Activated CD8-positive, alpha-beta T cell treated with anti-CD3 and anti-CD28 coated beads for 36 hours (primary cell): ENCODE measurements at regions of chr16 and their contacts with region 1.

Region 1: GRCh38 chr16:1863681-1864460 is 8.1 kb downstream of the MEIOB start:
- DNase-seq: no peak
- ATAC-seq: no peak
- H3K4me3 Mint-ChIP-seq: no peak overlapping the region
- H3K27ac Mint-ChIP-seq: no peak overlapping the region
- H3K4me1 Mint-ChIP-seq: peaks cover under 1% of the 10 kb centered on the region
- H3K27me3 Mint-ChIP-seq: peaks cover 16% of the 10 kb centered on the region
- CTCF ChIP-seq: peak; percentile 73

Region 2: DNA sequence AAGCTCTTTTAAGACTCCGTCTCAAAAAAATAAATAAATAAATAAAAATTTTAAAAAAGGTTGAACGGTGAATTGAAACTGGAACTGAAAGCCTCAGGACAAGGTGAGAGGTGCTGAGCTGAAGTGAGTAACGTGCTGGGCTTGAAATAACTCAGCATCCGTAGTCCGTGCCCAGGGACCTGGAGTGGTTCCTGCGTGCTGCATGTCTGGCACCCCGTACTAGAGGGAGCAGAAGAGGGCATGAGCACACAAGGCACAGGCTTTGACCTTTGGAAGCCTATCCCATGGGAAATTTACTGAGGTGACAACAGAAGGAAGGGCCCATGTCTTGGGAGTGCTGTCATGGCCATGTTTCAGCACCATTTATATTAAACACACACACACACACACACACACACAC is 12.6 kb after region 1 on chr16:
- CTCF ChIA-PET with region 1: interaction called, 15 read pairs
- POLR2A ChIA-PET with region 1: no interaction called
- intact Hi-C with region 1: no loop called
- DNase-seq: peak; percentile 13
- ATAC-seq: peak; percentile 57
- H3K4me3 Mint-ChIP-seq: no peak overlapping the region
- H3K27ac Mint-ChIP-seq: no peak overlapping the region
- H3K4me1 Mint-ChIP-seq: peaks cover 2% of the 10 kb centered on the region
- H3K27me3 Mint-ChIP-seq: peaks cover 21% of the 10 kb centered on the region
- CTCF ChIP-seq: no peak

Region 3: DNA sequence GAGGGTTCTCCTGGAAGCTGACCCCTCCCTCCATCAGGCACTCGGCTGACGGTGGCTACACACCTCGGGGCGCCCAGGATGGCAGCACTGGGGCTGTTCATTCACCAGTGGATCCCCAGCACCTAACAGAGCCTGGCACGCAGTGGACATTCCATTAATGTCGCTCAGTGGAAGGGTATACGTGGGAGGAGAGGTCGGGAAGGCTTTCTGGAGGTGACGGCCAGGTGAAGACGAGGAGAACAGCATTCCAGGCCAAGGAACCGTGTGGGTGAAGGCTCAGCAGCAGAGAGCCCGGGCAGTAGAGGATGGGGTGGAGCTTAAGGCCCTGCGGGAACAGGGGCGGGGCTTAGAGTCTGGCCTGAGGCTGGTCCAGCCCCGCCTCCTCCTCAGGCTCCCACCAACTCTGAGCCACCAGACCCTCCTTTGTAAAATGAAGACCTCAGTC is 56.9 kb after region 1 on chr16:
- CTCF ChIA-PET with region 1: interaction called, 6 read pairs
- POLR2A ChIA-PET with region 1: no interaction called
- intact Hi-C with region 1: loop called (anchors 5 kb)
- DNase-seq: peak; percentile 60
- ATAC-seq: peak; percentile 84
- H3K4me3 Mint-ChIP-seq: no peak overlapping the region
- H3K27ac Mint-ChIP-seq: no peak overlapping the region
- H3K4me1 Mint-ChIP-seq: no peaks in the 10 kb centered on the region
- H3K27me3 Mint-ChIP-seq: peaks cover 45% of the 10 kb centered on the region
- CTCF ChIP-seq: no peak

Region 4: GRCh38 chr16:1929578-1930337 is 65.9 kb after region 1 on chr16:
- CTCF ChIA-PET with region 1: interaction called, 29 read pairs
- POLR2A ChIA-PET with region 1: no interaction called
- intact Hi-C with region 1: no loop called
- DNase-seq: peak; percentile 92
- ATAC-seq: peak; percentile 98
- H3K4me3 Mint-ChIP-seq: peak overlapping the region; percentile 67
- H3K27ac Mint-ChIP-seq: no peak overlapping the region
- H3K4me1 Mint-ChIP-seq: peaks cover 2% of the 10 kb centered on the region
- H3K27me3 Mint-ChIP-seq: no peaks in the 10 kb centered on the region
- CTCF ChIP-seq: peak; percentile 98